Head of caudate nucleus (tissue), 42 donors: ENCODE measurements at regions of chr19 and their contacts with region 1.

Region 1: DNA sequence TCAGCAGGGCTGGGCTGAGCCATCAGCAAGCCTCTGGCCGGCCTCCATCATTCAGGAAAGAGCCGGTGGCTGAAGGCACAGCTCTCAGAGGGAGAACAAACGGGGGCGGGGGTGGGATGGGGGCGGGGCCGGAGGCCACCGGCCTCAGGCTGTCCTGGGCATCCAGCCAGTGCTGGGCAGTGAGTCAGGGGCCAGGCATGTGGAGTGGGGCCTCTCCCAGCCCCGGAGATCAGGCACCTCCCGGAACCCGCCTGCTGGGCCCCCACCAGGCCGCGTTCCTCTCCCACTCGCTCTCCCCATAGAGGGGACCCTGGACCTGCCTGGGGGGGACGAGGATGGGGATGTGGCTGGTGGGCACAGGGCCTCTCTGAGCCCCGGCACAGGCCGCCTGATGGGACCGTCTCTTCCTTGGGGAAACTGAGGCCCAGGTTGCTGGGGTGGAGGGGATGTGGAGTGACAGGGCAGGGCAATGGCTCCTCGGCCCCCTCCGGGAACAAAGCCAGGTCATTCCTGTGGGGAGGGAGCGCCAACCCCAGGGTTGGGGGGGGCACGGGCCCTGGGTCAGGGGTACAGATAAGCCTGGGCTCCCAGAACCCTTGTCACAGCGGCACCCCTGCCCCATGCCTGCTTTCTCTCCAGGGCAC is 12.9 kb downstream of the SPC24 start:
- DNase-seq: peak in 38 of 42 donors; percentile 16 to 87 (median 50)

Region 2: GRCh38 chr19:11203194-11204075 is 60.8 kb after region 1 on chr19:
- intact Hi-C with region 1: loop called (anchors 5 kb)
- DNase-seq: peak in 40 of 42 donors; percentile 20 to 90 (median 66)